HEK293T (cell line): ENCODE measurements at regions of chr7 and their contacts with region 1.

Region 1: DNA sequence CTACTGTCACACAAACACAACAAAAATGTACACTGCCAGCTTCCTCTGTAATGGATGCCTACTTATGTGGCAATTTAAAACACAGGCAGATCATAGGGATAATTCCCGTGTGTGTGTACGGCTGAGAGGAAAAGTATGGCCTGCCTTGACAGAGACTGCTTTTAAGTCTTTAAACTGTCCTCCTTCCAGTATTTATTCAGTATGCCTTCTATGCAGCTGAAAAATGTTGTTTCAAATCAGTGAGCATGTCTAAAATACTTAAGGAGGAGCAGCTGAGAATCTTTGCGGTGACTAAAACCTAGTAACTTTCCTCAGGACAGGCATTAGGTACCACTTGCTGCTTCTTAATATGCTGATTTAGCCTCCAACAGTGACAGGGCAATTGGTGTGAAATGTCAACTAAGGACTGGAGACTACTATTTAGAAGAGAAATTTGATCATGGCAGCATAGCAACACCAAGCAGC is 126.3 kb downstream of the CACNA2D1 start:
- DNase-seq: no peak

Region 2: GRCh38 chr7:81993186-81993585 is 324.1 kb before region 1 on chr7:
- CTCF ChIA-PET with region 1: interaction called, 10 read pairs
- POLR2A ChIA-PET with region 1: no interaction called
- DNase-seq: no peak

Region 3: DNA sequence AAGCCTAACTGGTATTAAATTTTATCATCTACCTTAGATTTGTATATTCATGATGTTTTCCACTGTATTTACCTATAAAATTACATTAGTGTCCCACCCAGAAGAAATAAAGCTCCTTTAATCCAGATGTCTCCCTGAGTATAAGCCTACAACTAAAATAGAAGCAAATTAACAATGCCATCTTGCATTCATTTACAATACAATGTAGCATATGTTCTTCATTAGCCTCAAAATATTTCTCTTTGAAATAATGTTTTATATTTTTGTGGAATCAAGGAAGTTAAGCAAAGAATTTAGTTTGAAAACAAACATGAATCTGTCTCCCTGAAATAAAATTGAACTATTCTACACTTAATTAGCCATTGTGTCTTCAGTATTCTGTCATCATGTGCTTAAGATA is 13.9 kb after region 1 on chr7:
- CTCF ChIA-PET with region 1: no interaction called
- POLR2A ChIA-PET with region 1: no interaction called
- DNase-seq: no peak